Activated CD4-positive, alpha-beta memory T cell treated with anti-CD3 and anti-CD28 coated beads for 36 hours (primary cell): ENCODE measurements at regions of chr1 and their contacts with region 1.

Region 1: GRCh38 chr1:230104395-230105244 is 37.6 kb downstream of the GALNT2 start:
- DNase-seq: peak; percentile 95
- H3K4me3 Mint-ChIP-seq: peak overlapping the region; percentile 66
- H3K27ac Mint-ChIP-seq: peak overlapping the region; percentile 86
- H3K4me1 Mint-ChIP-seq: peaks cover 80% of the 10 kb centered on the region
- H3K27me3 Mint-ChIP-seq: no peaks in the 10 kb centered on the region

Region 2: GRCh38 chr1:229440851-229441537 is 663.6 kb before region 1 on chr1:
- CTCF ChIA-PET with region 1: no interaction called
- POLR2A ChIA-PET with region 1: interaction called, 3 read pairs
- intact Hi-C with region 1: loop called (anchors 10 kb)
- DNase-seq: no peak
- H3K4me3 Mint-ChIP-seq: no peak overlapping the region
- H3K27ac Mint-ChIP-seq: peak overlapping the region; percentile 56
- H3K4me1 Mint-ChIP-seq: peaks cover 22% of the 10 kb centered on the region
- H3K27me3 Mint-ChIP-seq: peaks cover 17% of the 10 kb centered on the region

Region 3: DNA sequence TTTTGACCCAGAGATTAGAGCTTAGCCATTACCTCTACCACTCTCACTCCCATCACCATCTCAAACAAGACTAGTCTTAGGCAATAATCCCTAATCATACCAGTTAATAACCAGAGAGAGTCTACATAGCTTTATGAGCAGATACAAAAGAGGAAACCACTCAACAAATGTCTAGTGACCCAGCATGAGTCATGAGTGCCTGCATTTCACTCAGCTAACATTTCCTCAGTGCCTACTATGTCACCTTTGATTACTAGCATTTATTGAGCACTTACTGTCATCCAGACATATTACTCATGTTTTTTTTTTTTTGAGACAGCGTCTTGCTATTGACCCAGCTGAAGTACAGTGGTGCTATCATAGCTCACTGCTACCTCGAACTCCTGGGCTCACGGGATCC is 73.5 kb before region 1 on chr1:
- CTCF ChIA-PET with region 1: no interaction called
- POLR2A ChIA-PET with region 1: no interaction called
- intact Hi-C with region 1: loop called (anchors 5 kb)
- DNase-seq: peak; percentile 29
- H3K4me3 Mint-ChIP-seq: no peak overlapping the region
- H3K27ac Mint-ChIP-seq: peak overlapping the region; percentile 55
- H3K4me1 Mint-ChIP-seq: peaks cover 17% of the 10 kb centered on the region
- H3K27me3 Mint-ChIP-seq: peaks cover 2% of the 10 kb centered on the region

Region 4: DNA sequence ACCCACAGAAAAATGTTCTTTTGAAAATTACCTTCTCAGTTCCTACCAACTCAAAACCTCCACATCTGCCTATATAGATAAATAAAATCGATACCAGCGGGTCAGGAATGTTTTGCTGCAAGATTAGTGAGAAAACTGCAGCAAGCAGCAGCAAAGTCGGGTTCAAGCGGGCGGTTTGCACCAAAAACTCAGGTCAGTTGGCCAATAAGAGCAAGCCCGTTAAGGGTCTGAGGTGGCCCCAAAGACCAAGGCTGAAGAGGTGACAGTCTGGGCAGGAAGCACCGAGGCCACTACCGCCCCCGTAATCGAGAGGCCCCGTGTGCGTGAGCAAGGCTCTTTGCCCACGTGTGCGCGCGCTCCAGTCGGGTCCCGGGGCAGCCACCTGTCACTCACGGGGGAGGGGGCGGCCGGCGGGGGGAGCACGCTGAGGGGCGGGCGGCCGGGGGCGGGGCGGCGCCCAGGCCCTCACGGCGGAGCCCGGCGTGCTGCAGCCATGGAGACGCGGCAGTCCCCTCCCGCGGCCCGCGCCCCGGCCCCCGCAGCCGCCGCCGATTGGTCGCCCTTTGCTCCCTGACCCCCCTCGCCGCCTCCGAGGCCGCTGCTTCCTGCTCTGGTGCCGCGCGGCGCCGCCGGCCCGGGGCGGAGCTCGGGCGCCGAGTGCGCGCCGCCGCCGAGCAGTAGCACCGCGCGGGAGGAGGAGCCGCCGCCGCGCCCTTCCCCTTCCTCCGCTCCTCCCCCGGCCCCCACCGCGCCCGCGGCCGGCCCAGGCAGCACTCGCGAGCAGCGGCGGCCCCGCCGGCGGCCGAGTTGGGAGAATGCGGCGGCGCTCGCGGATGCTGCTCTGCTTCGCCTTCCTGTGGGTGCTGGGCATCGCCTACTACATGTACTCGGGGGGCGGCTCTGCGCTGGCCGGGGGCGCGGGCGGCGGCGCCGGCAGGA is 37.9 kb before region 1 on chr1 and contains the start of gene GALNT2:
- CTCF ChIA-PET with region 1: interaction called, 14 read pairs
- POLR2A ChIA-PET with region 1: interaction called, 8 read pairs
- intact Hi-C with region 1: loop called (anchors 1 kb)
- DNase-seq: peak; percentile 92
- H3K4me3 Mint-ChIP-seq: peak within 1 kb of the TSS; percentile 86
- H3K27ac Mint-ChIP-seq: peak within 1 kb of the TSS; percentile 83
- H3K4me1 Mint-ChIP-seq: peaks cover 37% of the 10 kb centered on the region
- H3K27me3 Mint-ChIP-seq: peaks cover 2% of the 10 kb centered on the region
- total RNA-seq, gene GALNT2: 49.5 to 51.0 TPM

Region 5: DNA sequence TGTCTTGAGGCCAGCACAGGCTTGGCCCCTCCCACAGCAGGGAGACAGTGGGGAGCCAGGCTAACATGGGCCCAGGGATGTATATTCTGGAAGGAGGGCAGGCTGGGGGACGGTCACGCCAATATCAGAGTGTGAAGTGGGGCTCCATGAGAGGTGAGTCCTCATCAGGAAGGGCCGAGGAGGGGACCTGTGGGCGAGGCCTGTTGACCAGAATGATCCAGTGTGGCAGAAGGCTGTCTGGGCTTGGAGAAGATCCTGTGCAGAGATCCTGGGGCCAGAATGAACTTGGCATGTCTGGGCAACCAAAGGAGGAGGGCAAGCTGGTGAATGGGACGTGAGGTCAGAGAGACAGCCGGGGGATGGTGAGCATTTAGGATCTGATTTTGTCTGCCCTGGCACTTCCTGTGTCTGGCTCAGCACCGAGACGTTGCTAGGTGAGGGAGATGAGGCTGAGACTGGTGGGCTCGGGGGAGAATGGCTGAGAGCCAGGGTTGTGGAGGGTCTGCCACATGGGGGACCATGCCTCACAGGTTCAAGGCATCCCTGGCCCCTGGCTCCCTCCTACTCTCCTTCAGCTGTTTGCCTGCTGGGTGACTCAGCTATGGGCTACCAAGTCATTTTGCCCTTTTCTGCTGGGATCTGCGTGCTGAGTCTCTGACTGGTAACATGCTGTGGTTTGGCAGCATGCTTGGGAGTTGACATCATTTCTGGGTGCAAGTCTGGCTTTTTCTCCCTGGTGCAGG is 20.3 kb before region 1 on chr1:
- CTCF ChIA-PET with region 1: interaction called, 9 read pairs
- POLR2A ChIA-PET with region 1: interaction called, 27 read pairs
- intact Hi-C with region 1: loop called (anchors 1 kb)
- DNase-seq: peak; percentile 90
- H3K4me3 Mint-ChIP-seq: peak overlapping the region; percentile 33
- H3K27ac Mint-ChIP-seq: peak overlapping the region; percentile 78
- H3K4me1 Mint-ChIP-seq: peaks cover 58% of the 10 kb centered on the region
- H3K27me3 Mint-ChIP-seq: peaks cover 1% of the 10 kb centered on the region

Region 6: DNA sequence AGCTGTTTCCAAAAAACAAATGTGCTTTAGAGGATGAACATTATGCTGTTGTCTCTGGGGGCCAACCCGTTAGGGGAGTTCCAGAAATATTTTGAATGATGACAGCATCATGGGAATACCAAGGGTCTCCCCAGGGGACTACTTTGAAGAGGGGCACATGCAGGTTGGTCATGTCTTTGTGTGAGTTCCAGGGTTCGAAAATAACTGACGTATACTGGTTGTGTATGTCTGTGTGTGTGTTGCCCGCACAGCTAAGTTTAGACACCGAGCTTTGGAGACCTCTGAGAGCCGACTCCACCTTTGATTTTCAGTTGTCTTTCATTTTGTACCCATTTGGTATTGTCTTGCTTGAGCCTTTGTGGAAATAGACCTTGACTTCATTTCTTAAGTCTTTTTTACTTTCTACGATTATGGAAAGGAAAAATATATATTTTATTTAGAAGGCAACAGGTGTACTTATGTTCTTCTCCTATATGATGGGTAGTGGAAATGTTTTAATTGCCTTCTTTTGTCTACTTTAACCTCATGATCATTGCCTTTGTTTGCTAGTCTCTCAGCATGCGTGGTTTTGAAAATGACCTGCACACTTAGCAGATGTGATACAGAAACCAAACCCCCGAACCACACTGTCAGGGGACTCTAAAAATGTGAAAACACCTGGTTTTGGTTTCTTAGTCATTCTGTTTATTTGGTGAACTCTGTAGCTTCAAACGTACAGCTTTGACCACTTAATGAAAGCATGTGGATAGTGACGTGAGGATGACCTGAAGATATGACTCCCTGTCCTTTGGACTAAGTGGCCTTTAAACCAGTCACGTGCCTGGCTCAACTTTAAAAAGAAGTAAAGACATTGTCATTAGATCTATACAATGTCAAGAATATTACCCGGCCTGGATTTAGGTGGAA is 18.9 kb after region 1 on chr1:
- CTCF ChIA-PET with region 1: interaction called, 22 read pairs
- POLR2A ChIA-PET with region 1: interaction called, 7 read pairs
- intact Hi-C with region 1: loop called (anchors 1 kb)
- DNase-seq: peak; percentile 50
- H3K4me3 Mint-ChIP-seq: no peak overlapping the region
- H3K27ac Mint-ChIP-seq: no peak overlapping the region
- H3K4me1 Mint-ChIP-seq: peaks cover 57% of the 10 kb centered on the region
- H3K27me3 Mint-ChIP-seq: no peaks in the 10 kb centered on the region

Region 7: DNA sequence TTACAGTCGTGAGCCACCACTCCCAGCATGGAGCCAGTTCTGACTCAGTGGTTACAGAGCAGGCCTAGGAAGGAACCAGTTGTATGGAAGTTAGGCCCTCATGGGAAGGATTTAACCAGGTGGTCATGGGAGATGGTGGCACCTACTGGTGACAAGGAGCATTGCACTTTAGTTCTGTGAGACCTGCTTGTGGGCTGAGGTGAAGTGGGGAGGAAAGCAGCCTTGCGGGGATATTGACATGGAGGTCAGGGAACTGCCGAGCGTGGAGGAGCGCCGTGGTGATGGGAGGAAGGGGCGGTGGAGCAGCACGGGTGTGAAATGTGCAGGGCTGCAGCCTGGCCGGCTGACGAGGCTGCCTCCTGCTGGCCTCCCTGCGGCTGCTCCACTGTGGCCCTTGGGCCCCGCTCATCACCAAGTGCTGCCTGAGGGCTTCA is 62.8 kb after region 1 on chr1:
- CTCF ChIA-PET with region 1: interaction called, 5 read pairs
- POLR2A ChIA-PET with region 1: no interaction called
- intact Hi-C with region 1: loop called (anchors 5 kb)
- DNase-seq: peak; percentile 55
- H3K4me3 Mint-ChIP-seq: no peak overlapping the region
- H3K27ac Mint-ChIP-seq: no peak overlapping the region
- H3K4me1 Mint-ChIP-seq: peaks cover 34% of the 10 kb centered on the region
- H3K27me3 Mint-ChIP-seq: no peaks in the 10 kb centered on the region

Region 8: GRCh38 chr1:230509281-230509977 is 404.8 kb after region 1 on chr1:
- CTCF ChIA-PET with region 1: no interaction called
- POLR2A ChIA-PET with region 1: no interaction called
- intact Hi-C with region 1: no loop called
- DNase-seq: peak; percentile 10
- H3K4me3 Mint-ChIP-seq: no peak overlapping the region
- H3K27ac Mint-ChIP-seq: no peak overlapping the region
- H3K4me1 Mint-ChIP-seq: peaks cover 5% of the 10 kb centered on the region
- H3K27me3 Mint-ChIP-seq: peaks cover 9% of the 10 kb centered on the region